Colonic mucosa (tissue), 4 donors: ENCODE measurements at regions of chr7 and their contacts with region 1.

Region 1: GRCh38 chr7:5083311-5083711 is 37.7 kb downstream of the RBAK start:
- DNase-seq: no peak
- H3K4me3 ChIP-seq: no peak overlapping the region
- H3K27ac ChIP-seq: no peak overlapping the region
- H3K4me1 ChIP-seq: no peaks in the 10 kb centered on the region
- H3K27me3 ChIP-seq: no peaks in the 10 kb centered on the region
- CTCF ChIP-seq: no peak

Region 2: DNA sequence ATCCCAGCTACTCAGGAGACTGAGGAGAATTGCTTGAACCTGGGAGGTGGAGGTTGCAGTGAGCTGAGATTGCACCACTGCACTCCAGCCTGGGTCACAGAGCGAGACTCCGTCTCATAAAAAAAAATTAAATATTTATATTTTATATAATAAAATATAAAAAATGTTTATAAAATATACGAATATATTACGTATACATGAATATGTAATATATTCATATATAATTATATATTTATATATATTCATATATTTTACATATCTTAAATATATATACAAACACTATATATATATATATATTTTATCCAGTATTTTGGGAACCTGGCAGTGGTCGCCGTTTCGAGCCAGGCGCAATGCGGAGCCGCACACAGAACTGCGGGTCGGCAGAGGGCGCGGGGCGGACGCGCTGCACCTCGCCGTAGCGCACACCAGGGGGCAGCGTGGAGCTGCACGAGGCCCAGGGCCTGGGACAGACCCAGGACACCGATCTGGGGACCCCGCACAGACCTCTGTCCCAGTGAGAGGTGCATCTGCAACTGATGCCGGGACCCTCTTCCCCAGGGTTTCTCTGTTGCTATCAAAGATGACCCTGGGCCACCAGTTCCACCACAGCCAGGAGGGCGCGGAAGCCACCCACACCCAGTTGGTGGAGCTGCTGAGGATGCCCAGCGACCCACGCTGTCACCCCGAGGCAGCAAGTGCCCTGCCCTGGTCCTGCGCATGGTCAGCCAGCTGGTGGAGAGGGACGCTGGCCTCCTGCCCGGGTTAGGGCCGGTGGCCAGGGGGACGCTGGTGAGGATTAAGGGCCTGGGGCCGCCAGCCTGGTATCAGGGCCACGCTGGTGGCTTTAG is 285.2 kb before region 1 on chr7:
- intact Hi-C with region 1: loop called (anchors 2 kb)
- DNase-seq: peak; percentile 44
- H3K4me3 ChIP-seq: no peak overlapping the region
- H3K27ac ChIP-seq: no peak overlapping the region
- H3K4me1 ChIP-seq: peaks cover under 1% of the 10 kb centered on the region
- H3K27me3 ChIP-seq: no peaks in the 10 kb centered on the region
- CTCF ChIP-seq: peak; percentile 94

Region 3: GRCh38 chr7:4830176-4830575 is 253.1 kb before region 1 on chr7:
- intact Hi-C with region 1: loop called (anchors 10 kb)
- DNase-seq: peak; percentile 64
- H3K4me3 ChIP-seq: no peak overlapping the region
- H3K27ac ChIP-seq: no peak overlapping the region
- H3K4me1 ChIP-seq: no peaks in the 10 kb centered on the region
- H3K27me3 ChIP-seq: no peaks in the 10 kb centered on the region
- CTCF ChIP-seq: peak; percentile 47

Region 4: DNA sequence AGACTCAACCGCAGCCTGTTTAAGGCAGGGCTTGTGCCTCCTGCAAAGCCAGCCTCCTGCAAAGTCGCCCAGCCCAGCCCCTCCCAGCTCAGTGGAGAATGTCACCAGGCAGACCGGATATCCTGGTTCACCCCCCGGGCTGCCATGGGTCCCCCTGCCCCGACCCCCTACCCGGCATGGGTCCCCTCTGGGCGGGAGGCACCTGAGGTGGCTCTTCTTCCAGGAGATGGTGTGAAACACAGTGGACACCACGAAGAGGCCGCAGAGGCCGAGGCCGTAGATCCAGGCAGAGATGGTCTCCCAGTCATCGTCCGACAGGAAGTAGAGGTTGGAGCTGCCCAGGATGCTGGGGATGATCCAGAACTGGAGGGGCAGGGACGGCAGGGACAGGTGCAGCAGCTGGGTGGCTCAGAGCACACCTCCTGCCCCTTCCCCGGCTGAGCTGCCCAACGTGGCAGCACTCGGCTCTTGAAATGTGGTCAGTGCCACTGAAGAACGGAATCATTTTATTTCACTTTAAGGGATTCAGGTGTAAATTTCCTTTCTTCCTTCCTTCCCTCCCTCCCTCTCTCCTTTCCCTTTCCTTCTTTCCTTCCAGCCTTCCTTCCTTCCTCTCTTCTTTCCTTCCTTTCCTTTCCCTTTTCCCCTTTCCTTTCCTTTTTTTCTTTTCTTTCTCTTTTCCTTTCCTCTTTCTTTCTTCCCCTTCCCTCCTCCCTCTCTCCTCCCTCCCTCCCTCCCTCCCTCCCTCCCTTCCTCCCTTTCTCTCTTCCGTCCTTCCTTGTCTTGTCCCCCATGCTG is 163.1 kb before region 1 on chr7:
- intact Hi-C with region 1: no loop called
- DNase-seq: no peak
- H3K4me3 ChIP-seq: no peak overlapping the region
- H3K27ac ChIP-seq: no peak overlapping the region
- H3K4me1 ChIP-seq: no peaks in the 10 kb centered on the region
- H3K27me3 ChIP-seq: no peaks in the 10 kb centered on the region
- CTCF ChIP-seq: no peak

Region 5: DNA sequence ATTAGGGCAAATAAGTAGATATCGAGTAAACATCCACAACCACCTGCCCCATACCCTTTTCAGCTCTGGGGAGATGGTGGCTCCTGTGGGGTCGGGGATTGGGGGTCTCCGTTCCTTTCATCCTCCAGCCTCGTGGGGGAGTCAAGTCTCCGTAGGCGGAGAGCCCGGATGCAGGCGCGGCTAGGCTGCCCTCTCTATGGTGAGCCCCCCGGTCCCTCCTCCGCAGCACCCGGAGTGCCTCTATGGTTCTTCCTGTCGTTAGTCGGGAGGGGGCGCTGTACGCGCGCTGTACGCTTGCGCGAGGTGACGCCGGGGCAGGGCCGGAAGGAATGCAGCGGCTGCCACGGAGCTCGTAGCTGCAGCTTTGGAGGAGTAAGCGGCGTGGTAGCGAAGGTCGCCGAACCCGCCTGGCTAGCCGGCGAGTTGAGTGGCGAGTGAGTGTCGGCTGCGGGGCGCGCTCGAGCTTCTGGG is 109.5 kb before region 1 on chr7:
- intact Hi-C with region 1: loop called (anchors 2 kb)
- DNase-seq: peak; percentile 92
- H3K4me3 ChIP-seq: peak overlapping the region; percentile 84
- H3K27ac ChIP-seq: peak overlapping the region; percentile 89
- H3K4me1 ChIP-seq: no peaks in the 10 kb centered on the region
- H3K27me3 ChIP-seq: no peaks in the 10 kb centered on the region
- CTCF ChIP-seq: peak; percentile 74

Region 6: GRCh38 chr7:5495581-5496375 is 412.5 kb after region 1 on chr7:
- intact Hi-C with region 1: no loop called
- DNase-seq: no peak
- H3K4me3 ChIP-seq: no peak overlapping the region
- H3K27ac ChIP-seq: no peak overlapping the region
- H3K4me1 ChIP-seq: no peaks in the 10 kb centered on the region
- H3K27me3 ChIP-seq: no peaks in the 10 kb centered on the region
- CTCF ChIP-seq: no peak